WTC11 (cell line): ENCODE measurements at regions of chr6 and their contacts with region 1.

Region 1: GRCh38 chr6:33276864-33277662 is at the start of gene B3GALT4:
- DNase-seq: peak; percentile 89
- ATAC-seq: peak; percentile 74
- H3K4me3 Mint-ChIP-seq: peak within 1 kb of the TSS; percentile 96
- H3K27ac Mint-ChIP-seq: peak within 1 kb of the TSS; percentile 100
- H3K4me1 Mint-ChIP-seq: peaks cover 54% of the 10 kb centered on the region
- H3K27me3 Mint-ChIP-seq: no peaks in the 10 kb centered on the region
- CTCF ChIP-seq: peak; percentile 36
- total RNA-seq, gene B3GALT4: 3.2 to 5.0 TPM (median 4.1 TPM) in 3 replicates

Region 2: GRCh38 chr6:33288921-33289748 is 12.1 kb after region 1 on chr6 and contains the starts of genes PFDN6 and WDR46:
- CTCF ChIA-PET with region 1: interaction called, 36 read pairs
- POLR2A ChIA-PET with region 1: interaction called, 27 read pairs
- DNase-seq: peak; percentile 68
- ATAC-seq: peak; percentile 94
- H3K4me3 Mint-ChIP-seq: peak within 1 kb of the TSS; percentile 99
- H3K27ac Mint-ChIP-seq: peak within 1 kb of the TSS; percentile 95
- H3K4me1 Mint-ChIP-seq: peaks cover 22% of the 10 kb centered on the region
- H3K27me3 Mint-ChIP-seq: no peaks in the 10 kb centered on the region
- CTCF ChIP-seq: no peak
- total RNA-seq, gene PFDN6: 83.3 to 95.7 TPM (median 85.6 TPM) in 3 replicates
- total RNA-seq, gene WDR46: 72.0 to 94.5 TPM (median 72.4 TPM) in 3 replicates

Region 3: DNA sequence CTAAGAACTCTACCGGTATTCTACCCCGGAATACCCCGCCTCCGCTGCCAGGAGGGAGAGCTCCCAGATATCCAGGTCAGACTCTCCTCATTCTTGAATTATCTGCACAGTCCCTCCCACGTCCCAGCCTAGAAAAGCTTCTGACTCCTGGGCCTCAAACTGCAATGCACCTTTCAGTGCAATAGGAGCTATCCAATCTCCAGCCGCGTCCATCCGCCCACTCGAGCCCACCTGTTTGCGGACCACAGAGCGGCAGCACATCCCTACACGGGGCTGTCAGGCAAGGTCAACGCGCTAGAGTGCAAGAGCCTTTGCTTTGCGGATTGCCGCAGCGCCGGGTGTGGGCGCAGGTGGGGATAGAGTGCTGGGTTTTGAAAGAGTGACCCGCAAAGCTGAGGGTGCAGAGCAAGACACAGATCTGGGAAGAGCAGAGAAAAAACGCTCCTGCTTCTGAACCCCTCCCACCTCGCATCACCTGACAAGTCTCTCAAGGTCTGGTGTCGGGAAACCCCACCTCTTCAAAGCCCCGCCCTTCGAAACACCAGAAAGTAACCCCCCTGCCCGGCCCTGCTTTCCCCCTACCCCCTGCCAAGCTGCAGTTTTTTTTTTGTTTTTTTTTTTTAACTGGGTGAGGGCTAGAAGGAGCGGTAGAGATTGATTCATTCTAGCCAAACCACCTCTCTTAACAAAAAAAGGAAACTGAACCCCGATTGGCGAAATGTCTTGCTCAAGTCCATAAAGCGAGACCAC is 35.5 kb after region 1 on chr6:
- CTCF ChIA-PET with region 1: interaction called, 16 read pairs
- POLR2A ChIA-PET with region 1: interaction called, 8 read pairs
- DNase-seq: peak; percentile 81
- ATAC-seq: peak; percentile 60
- H3K4me3 Mint-ChIP-seq: peak overlapping the region; percentile 93
- H3K27ac Mint-ChIP-seq: peak overlapping the region; percentile 93
- H3K4me1 Mint-ChIP-seq: peaks cover 32% of the 10 kb centered on the region
- H3K27me3 Mint-ChIP-seq: no peaks in the 10 kb centered on the region; the same call in 1 of the 2 replicates
- CTCF ChIP-seq: no peak

Region 4: GRCh38 chr6:33344701-33345697 is 67.9 kb after region 1 on chr6:
- CTCF ChIA-PET with region 1: interaction called, 10 read pairs
- POLR2A ChIA-PET with region 1: no interaction called
- DNase-seq: peak; percentile 47
- ATAC-seq: peak; percentile 56
- H3K4me3 Mint-ChIP-seq: peak overlapping the region; percentile 26
- H3K27ac Mint-ChIP-seq: peak overlapping the region; percentile 21
- H3K4me1 Mint-ChIP-seq: peaks cover 18% of the 10 kb centered on the region
- H3K27me3 Mint-ChIP-seq: peaks cover 3% of the 10 kb centered on the region; the same call in 1 of the 2 replicates
- CTCF ChIP-seq: peak; percentile 43

Region 5: GRCh38 chr6:33425668-33426577 is 148.9 kb after region 1 on chr6:
- CTCF ChIA-PET with region 1: interaction called, 12 read pairs
- POLR2A ChIA-PET with region 1: interaction called, 5 read pairs
- DNase-seq: peak; percentile 93
- ATAC-seq: peak; percentile 76
- H3K4me3 Mint-ChIP-seq: peak overlapping the region; percentile 85
- H3K27ac Mint-ChIP-seq: peak overlapping the region; percentile 93
- H3K4me1 Mint-ChIP-seq: peaks cover 74% of the 10 kb centered on the region
- H3K27me3 Mint-ChIP-seq: no peaks in the 10 kb centered on the region; the same call in 1 of the 2 replicates
- CTCF ChIP-seq: 0 out of 2 replicates have a peak, but pooled peaks have one; percentile 23